Activated T-helper 1 cell treated with anti-CD3 and anti-CD28 coated beads, Interleukin-12 subunit alpha, Interleukin-12 subunit beta, Interleukin-2, Interleukin-4 antibody, amounts not matched to agents 30 ng/mL and 10 ng/mL and 1 ng/mL, durations not matched to agents 14 hours and 24 hours and 36 hours (primary cell): ENCODE measurements at regions of chr1 and their contacts with region 1.

Region 1: GRCh38 chr1:92536980-92537884 is 50.5 kb upstream of the GFI1 start:
- DNase-seq: peak; percentile 51
- H3K4me3 Mint-ChIP-seq: peak overlapping the region; percentile 60
- H3K27ac Mint-ChIP-seq: peak overlapping the region; percentile 92
- H3K4me1 Mint-ChIP-seq: peaks cover 86% of the 10 kb centered on the region
- H3K27me3 Mint-ChIP-seq: no peaks in the 10 kb centered on the region

Region 2: GRCh38 chr1:91754348-91754747 is 782.9 kb before region 1 on chr1:
- intact Hi-C with region 1: loop called (anchors 2 kb)
- DNase-seq: no peak
- H3K4me3 Mint-ChIP-seq: no peak overlapping the region
- H3K27ac Mint-ChIP-seq: peak overlapping the region; percentile 67
- H3K4me1 Mint-ChIP-seq: peaks cover 46% of the 10 kb centered on the region
- H3K27me3 Mint-ChIP-seq: peaks cover 6% of the 10 kb centered on the region

Region 3: DNA sequence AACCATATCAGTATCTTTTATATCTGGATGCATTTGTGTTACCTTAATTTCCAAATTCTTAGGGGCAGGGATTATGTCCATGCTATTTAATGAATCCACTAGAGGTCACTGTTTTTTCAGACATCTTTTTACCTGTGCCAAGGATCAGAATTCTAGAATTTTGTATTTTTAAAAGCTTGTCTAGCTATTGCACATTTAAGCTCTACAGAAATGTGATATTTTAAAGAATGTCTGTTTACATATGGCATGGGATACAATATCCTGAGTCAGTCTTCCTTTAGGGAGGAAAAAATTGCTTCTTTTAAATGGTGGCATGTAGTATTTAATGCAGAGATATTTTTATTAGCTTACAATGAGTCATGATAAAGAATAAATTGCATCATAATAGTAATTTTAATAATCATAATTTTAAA is 227.0 kb before region 1 on chr1:
- intact Hi-C with region 1: loop called (anchors 1 kb)
- DNase-seq: no peak
- H3K4me3 Mint-ChIP-seq: no peak overlapping the region
- H3K27ac Mint-ChIP-seq: no peak overlapping the region
- H3K4me1 Mint-ChIP-seq: peaks cover 42% of the 10 kb centered on the region
- H3K27me3 Mint-ChIP-seq: no peaks in the 10 kb centered on the region

Region 4: DNA sequence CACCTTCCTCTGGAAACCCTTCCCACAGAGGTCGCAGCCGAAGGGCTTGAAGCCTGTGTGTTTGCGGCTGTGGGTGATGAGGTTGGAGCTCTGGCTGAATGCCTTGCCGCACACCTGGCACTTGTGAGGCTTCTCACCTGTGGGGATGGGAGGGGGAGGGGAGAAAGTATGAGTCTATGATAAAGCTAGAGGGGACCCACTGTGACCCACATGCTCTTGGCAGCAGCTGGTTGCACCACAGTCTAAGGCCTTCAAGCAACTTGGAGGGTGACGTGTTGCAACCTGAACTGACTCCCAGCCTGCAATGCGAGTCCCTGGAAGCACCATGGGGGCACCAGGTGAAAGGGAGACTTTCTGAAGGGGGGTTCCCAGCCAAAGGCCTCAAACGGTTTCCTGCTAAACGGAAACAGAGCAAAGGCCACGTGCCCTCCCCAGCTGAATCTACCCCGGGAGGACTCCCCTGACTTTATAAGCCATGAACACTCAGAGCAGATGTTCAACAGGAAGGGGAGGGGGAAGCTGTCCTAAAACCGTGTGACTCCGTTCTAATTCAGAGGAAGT is 61.1 kb before region 1 on chr1:
- intact Hi-C with region 1: loop called (anchors 1 kb)
- DNase-seq: peak; percentile 67
- H3K4me3 Mint-ChIP-seq: peak overlapping the region; percentile 71
- H3K27ac Mint-ChIP-seq: peak overlapping the region; percentile 79
- H3K4me1 Mint-ChIP-seq: peaks cover 81% of the 10 kb centered on the region
- H3K27me3 Mint-ChIP-seq: no peaks in the 10 kb centered on the region

Region 5: GRCh38 chr1:92577261-92577895 is 40.1 kb after region 1 on chr1:
- intact Hi-C with region 1: loop called (anchors 2 kb)
- DNase-seq: no peak
- H3K4me3 Mint-ChIP-seq: peak overlapping the region; percentile 89
- H3K27ac Mint-ChIP-seq: peak overlapping the region; percentile 75
- H3K4me1 Mint-ChIP-seq: peaks cover 81% of the 10 kb centered on the region
- H3K27me3 Mint-ChIP-seq: no peaks in the 10 kb centered on the region

Region 6: GRCh38 chr1:92619466-92620189 is 82.4 kb after region 1 on chr1:
- intact Hi-C with region 1: no loop called
- DNase-seq: no peak
- H3K4me3 Mint-ChIP-seq: no peak overlapping the region
- H3K27ac Mint-ChIP-seq: no peak overlapping the region
- H3K4me1 Mint-ChIP-seq: no peaks in the 10 kb centered on the region
- H3K27me3 Mint-ChIP-seq: peaks cover 2% of the 10 kb centered on the region

Region 7: DNA sequence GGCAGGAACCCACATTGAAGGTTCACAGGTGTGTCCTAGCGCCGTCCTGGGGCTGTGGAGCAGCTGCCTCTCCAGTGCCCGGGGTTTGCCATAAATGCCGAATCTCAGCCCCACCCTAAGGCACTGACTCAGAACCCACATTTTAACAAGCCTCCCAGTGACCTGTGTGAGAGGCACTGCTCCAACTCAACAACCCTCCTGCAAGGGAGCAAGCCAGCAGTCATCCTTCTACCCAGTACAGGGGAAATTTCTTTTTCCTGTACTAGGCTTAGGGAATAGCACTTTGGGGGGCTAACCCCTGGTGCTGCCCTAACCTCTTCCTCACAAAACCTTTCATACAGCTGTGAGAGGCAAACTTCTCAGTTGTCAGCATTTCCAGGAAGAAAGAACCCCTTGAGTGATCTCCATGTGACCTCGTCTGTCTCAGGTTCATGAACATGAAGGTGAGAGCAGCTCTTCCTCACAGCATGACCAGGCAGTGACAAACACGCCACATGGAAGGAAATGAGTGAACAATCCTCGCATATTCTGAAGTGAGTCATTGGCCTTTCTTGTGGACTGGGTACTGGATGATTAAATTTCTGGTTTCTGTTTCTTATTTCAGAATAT is 1155.9 kb after region 1 on chr1:
- intact Hi-C with region 1: loop called (anchors 2 kb)
- DNase-seq: peak; percentile 26
- H3K4me3 Mint-ChIP-seq: no peak overlapping the region
- H3K27ac Mint-ChIP-seq: peak overlapping the region; percentile 63
- H3K4me1 Mint-ChIP-seq: no peaks in the 10 kb centered on the region
- H3K27me3 Mint-ChIP-seq: peaks cover 13% of the 10 kb centered on the region